AG04450 (cell line): ENCODE measurements at regions of chr19 and their contacts with region 1.

Region 1: GRCh38 chr19:39846176-39846677 is at the start of gene FBL:
- DNase-seq: peak; percentile 75
- H3K4me3 ChIP-seq: peak within 1 kb of the TSS; percentile 92
- H3K27ac ChIP-seq: peak within 1 kb of the TSS; percentile 77
- H3K27me3 ChIP-seq: no peaks in the 10 kb centered on the region
- CTCF ChIP-seq: no peak
- polyA plus RNA-seq, gene FBL: 256 and 329 TPM in 2 replicates

Region 2: DNA sequence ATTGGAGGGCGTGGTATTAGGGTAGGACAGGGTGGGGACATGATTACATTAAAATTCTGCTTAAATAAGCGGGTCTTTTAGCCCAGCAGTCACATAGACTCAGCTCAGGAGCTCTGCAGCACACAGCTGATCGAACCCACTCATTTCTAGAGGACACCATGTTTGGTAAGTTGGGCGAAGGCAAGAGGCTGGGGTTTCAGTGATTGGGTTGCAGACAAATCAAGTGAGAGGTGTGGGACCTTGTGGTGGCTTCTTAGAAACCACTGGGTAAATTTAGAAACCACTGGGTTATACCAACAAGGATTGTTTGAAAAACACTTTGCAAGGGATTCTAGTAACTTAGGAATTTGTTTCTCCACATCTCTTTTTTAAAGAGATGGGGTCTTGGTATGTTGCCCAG is 67.5 kb before region 1 on chr19 and contains the start of gene LEUTX:
- CTCF ChIA-PET with region 1: interaction called, 10 read pairs
- POLR2A ChIA-PET with region 1: no interaction called
- DNase-seq: no peak
- H3K4me3 ChIP-seq: no peak within 1 kb of the TSS
- H3K27ac ChIP-seq: no peak within 1 kb of the TSS
- H3K27me3 ChIP-seq: peaks cover 7% of the 10 kb centered on the region
- CTCF ChIP-seq: no peak
- polyA plus RNA-seq, gene LEUTX: not detected in 2 replicates

Region 3: GRCh38 chr19:39818626-39819097 is 27.6 kb before region 1 on chr19:
- CTCF ChIA-PET with region 1: interaction called, 10 read pairs
- POLR2A ChIA-PET with region 1: no interaction called
- DNase-seq: no peak
- H3K4me3 ChIP-seq: no peak overlapping the region
- H3K27ac ChIP-seq: no peak overlapping the region
- H3K27me3 ChIP-seq: no peaks in the 10 kb centered on the region
- CTCF ChIP-seq: no peak

Region 4: GRCh38 chr19:39833464-39834286 is 12.6 kb before region 1 on chr19 and contains the start of gene DYRK1B:
- CTCF ChIA-PET with region 1: interaction called, 38 read pairs
- POLR2A ChIA-PET with region 1: interaction called, 23 read pairs
- DNase-seq: peak; percentile 96
- H3K4me3 ChIP-seq: peak within 1 kb of the TSS; percentile 86
- H3K27ac ChIP-seq: peak within 1 kb of the TSS; percentile 89
- H3K27me3 ChIP-seq: no peaks in the 10 kb centered on the region
- CTCF ChIP-seq: no peak
- polyA plus RNA-seq, gene DYRK1B: 7.2 and 9.2 TPM in 2 replicates

Region 5: GRCh38 chr19:39906820-39907611 is 60.8 kb after region 1 on chr19:
- CTCF ChIA-PET with region 1: no interaction called
- POLR2A ChIA-PET with region 1: no interaction called
- DNase-seq: no peak
- H3K4me3 ChIP-seq: no peak overlapping the region
- H3K27ac ChIP-seq: no peak overlapping the region
- H3K27me3 ChIP-seq: no peaks in the 10 kb centered on the region
- CTCF ChIP-seq: no peak